ENCODE measurements at regions of chr2 and their contacts with region 1.

Region 1: DNA sequence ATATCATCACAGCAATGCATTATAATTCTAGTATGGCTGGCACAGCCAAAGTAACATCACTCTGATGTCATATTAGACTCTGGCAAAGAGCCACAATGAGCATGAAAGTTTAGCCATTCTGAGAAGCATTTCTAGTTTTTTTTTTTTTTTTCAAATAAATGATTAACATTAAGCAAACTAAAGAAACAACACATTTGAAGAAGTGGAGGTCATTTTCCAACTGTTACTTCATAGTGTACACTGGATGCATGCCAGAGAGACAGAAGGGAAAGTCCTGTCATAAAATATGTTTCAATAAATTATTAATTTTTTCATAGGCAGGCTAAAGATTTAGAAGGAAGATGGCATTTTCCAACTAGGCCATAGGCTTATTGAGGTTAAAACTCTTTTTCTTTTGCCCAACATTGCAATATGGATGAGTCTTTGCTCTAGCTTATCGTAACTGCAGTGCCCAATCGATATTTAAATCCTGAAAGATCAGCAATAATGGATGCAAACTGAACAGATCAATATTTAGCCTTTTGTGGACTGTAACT is 1630.4 kb upstream of the ACVR2A start:
- DNase-seq: no peak

Region 2: GRCh38 chr2:145524836-145525235 is 689.6 kb before region 1 on chr2:
- intact Hi-C with region 1: loop called in 1 of 2 experiments (anchors 5 kb)
- DNase-seq: no peak

Region 3: GRCh38 chr2:146203064-146203624 is 11.3 kb before region 1 on chr2:
- intact Hi-C with region 1: no loop called
- DNase-seq: no peak

Region 4: GRCh38 chr2:146246002-146246735 is 31.7 kb after region 1 on chr2:
- intact Hi-C with region 1: no loop called
- DNase-seq: no peak